A549 (cell line): ENCODE measurements at regions of chr1 and their contacts with region 1.

Region 1: DNA sequence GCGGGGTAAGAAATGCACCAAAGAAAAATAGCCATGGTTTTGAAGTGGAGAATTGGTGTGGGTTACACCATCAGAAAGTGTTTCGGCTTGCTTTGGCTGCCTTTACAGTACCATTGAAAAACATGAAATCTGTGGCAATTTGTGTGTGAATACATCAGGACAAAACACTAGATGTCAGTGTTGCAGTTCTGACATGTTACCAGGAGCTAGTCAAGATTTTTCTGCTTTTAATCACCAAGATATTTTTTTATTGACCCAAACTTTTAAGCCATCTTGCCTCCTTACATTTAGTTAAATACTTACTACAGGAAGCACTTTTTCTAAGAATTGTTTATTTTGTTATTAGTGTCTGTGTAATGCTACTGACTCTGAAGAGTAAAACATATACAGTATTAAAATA is 14.3 kb downstream of the RRP15 start:
- DNase-seq: peak; percentile 26 to 62
- ATAC-seq: peak; percentile 77 to 88; a peak in 5 of 6 replicates
- H3K4me3 ChIP-seq: no peak overlapping the region
- H3K27ac ChIP-seq: no peak overlapping the region
- H3K4me1 ChIP-seq: peaks cover 28% of the 10 kb centered on the region
- CTCF ChIP-seq: peak; percentile 75
- EP300 ChIP-seq: no peak
- POLR2A ChIP-seq: no peak
- RAD21 ChIP-seq: peak; percentile 68 to 70

Region 2: GRCh38 chr1:218284934-218285635 is 14.3 kb before region 1 on chr1 and contains the start of gene RRP15:
- CTCF ChIA-PET with region 1: interaction called, 8 read pairs
- POLR2A ChIA-PET with region 1: interaction called, 10 read pairs
- DNase-seq: peak; percentile 91 to 93
- ATAC-seq: peak; percentile 99 to 100
- H3K4me3 ChIP-seq: peak within 1 kb of the TSS; percentile 85
- H3K27ac ChIP-seq: peak within 1 kb of the TSS; percentile 86 to 97
- H3K4me1 ChIP-seq: peaks cover 10% of the 10 kb centered on the region; the same call in 1 of the 3 replicates
- CTCF ChIP-seq: no peak
- EP300 ChIP-seq: no peak
- POLR2A ChIP-seq: peak; percentile 75
- RAD21 ChIP-seq: 0 out of 5 replicates have a peak, but pooled peaks of 1 of the 2 experiments have one; percentile 14
- polyA plus RNA-seq, gene RRP15: 6.9 and 19.5 TPM in 2 replicates